ENCODE measurements at regions of chr14 and their contacts with region 1.

Region 1: DNA sequence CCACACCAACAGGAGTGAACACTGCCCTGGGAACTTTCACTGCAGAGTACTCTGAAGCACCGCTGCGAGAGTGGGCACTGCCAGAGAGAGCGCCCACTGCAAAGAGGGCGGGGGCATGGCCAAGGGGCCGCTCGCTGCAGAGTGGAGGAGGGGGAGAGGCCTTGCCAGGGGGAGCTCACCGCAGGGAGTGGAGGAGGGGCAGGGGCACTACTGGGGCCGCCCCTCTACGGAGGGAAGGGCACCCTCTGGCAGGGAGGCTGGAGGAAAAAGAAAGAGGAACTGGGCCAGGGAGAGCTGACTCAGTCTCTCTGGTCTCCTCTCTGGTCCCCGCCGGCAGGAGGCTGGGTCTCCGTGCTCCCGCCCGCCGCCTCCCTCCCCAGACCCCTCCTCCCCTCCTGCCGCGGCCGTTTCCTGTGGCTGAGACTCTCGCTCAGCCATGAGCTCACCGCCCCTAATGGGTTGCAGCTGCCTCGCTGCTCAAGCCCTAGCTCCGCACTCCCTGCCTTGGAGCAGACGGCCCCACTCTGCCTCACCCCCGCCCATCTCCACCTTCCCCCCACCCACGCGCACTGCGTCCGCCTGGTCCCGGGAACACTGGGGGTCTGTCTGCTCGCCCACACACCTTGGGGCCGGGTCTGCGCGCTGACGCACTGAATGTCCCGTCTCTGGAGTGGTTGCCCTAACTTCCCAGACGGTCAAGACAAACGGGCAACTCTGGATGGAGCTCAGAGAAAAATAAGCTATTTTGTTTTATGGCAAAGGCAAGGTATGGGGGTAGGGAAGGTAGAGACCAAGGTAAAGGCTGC is 1.3 kb downstream of the ARHGEF40 start:
- DNase-seq: peak; percentile 98
- H3K4me3 ChIP-seq: peak overlapping the region; percentile 98
- H3K27ac ChIP-seq: peak overlapping the region; percentile 90
- H3K4me1 ChIP-seq: peaks cover 27% of the 10 kb centered on the region
- H3K27me3 ChIP-seq: no peaks in the 10 kb centered on the region
- CTCF ChIP-seq: no peak

Region 2: DNA sequence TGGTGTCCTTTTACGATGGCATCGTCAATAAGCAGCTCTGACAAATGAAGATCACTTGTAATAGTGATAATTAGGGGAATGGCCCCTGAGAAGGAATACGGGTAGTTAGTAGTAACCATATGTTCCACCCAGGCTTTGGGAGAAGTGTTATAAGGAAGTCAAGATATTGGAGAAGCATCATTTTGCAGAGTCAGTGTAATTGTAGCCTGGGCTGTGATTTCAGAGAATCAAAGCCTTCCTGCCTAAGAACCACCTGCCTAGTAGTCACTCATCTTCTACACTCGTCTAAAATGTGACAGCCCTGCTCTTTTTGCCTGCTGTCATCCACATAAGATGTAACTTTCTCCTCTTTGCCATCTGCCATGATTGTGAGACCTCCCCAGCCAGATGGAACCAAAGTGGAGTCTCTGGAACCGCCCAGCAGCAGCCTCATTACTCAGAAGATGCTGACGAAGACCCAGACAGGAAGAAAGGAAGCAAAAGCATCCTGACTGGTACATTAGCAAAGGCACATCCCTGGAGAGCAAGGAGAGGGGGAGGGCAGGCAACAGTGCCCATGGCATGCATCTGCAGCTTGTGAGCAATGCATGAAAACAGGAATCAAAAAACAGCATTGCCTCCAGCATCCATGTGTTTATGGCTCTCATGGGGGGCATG is 338.3 kb before region 1 on chr14:
- CTCF ChIA-PET with region 1: no interaction called
- POLR2A ChIA-PET with region 1: no interaction called
- intact Hi-C with region 1: no loop called
- DNase-seq: no peak
- H3K4me3 ChIP-seq: no peak overlapping the region
- H3K27ac ChIP-seq: no peak overlapping the region
- H3K4me1 ChIP-seq: no peaks in the 10 kb centered on the region
- H3K27me3 ChIP-seq: peaks cover 13% of the 10 kb centered on the region
- CTCF ChIP-seq: no peak

Region 3: GRCh38 chr14:21092273-21093011 is 21.0 kb after region 1 on chr14:
- CTCF ChIA-PET with region 1: interaction called, 24 read pairs
- POLR2A ChIA-PET with region 1: interaction called, 15 read pairs
- intact Hi-C with region 1: loop called (anchors 1 kb)
- DNase-seq: peak; percentile 74
- H3K4me3 ChIP-seq: no peak overlapping the region
- H3K27ac ChIP-seq: peak overlapping the region; percentile 60
- H3K4me1 ChIP-seq: peaks cover 46% of the 10 kb centered on the region
- H3K27me3 ChIP-seq: no peaks in the 10 kb centered on the region
- CTCF ChIP-seq: peak; percentile 100

Region 4: GRCh38 chr14:21097636-21098075 is 26.2 kb after region 1 on chr14:
- CTCF ChIA-PET with region 1: interaction called, 24 read pairs
- POLR2A ChIA-PET with region 1: interaction called, 15 read pairs
- intact Hi-C with region 1: loop called (anchors 1 kb)
- DNase-seq: peak; percentile 42
- H3K4me3 ChIP-seq: peak overlapping the region; percentile 55
- H3K27ac ChIP-seq: peak overlapping the region; percentile 83
- H3K4me1 ChIP-seq: peaks cover 60% of the 10 kb centered on the region
- H3K27me3 ChIP-seq: no peaks in the 10 kb centered on the region
- CTCF ChIP-seq: no peak

Region 5: GRCh38 chr14:21103710-21104447 is 32.5 kb after region 1 on chr14:
- CTCF ChIA-PET with region 1: interaction called, 23 read pairs
- POLR2A ChIA-PET with region 1: interaction called, 5 read pairs
- intact Hi-C with region 1: loop called (anchors 1 kb)
- DNase-seq: peak; percentile 99
- H3K4me3 ChIP-seq: peak overlapping the region; percentile 92
- H3K27ac ChIP-seq: peak overlapping the region; percentile 100
- H3K4me1 ChIP-seq: peaks cover 30% of the 10 kb centered on the region
- H3K27me3 ChIP-seq: no peaks in the 10 kb centered on the region
- CTCF ChIP-seq: peak; percentile 84